MCF 10A (cell line): ENCODE measurements at regions of chr17 and their contacts with region 1.

Region 1: DNA sequence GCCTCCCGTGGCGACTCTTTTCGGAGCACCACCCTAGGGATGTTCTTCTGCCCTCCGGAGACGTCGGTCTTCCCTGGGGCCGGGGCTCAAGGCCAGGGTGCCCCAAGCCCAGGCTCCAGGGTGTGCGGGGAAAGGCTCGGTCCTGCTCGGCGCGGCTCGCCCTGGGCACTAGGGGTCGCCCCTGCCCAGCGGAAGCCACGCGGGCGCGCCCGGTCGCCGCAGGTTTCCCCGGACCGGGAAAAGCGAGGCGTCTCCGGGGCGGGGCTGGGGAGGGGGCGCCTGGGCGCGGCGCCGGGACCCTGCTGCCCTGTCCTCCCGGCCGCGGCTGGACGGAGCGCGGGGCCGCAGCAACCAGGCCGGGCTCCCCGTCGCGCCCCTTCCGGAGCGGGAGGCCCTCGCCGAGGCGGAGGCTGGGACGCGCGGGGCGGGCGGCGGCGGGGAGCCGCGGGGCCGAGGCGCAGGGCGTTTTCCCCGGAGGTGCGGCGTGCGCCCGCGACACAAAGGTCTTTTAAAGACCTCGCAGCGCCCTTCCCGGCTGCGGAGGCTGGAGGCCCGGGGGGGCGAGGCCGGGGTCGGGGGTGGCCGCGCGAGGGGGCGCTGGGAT is 76.4 kb downstream of the MRC2 start:
- DNase-seq: peak; percentile 75
- H3K4me3 Mint-ChIP-seq: peak overlapping the region; percentile 74
- H3K27ac Mint-ChIP-seq: peak overlapping the region; percentile 15
- H3K4me1 Mint-ChIP-seq: peaks cover 7% of the 10 kb centered on the region
- H3K27me3 Mint-ChIP-seq: no peaks in the 10 kb centered on the region
- CTCF ChIP-seq: peak; percentile 88

Region 2: GRCh38 chr17:62819475-62820212 is 115.8 kb after region 1 on chr17:
- CTCF ChIA-PET with region 1: interaction called, 4 read pairs
- POLR2A ChIA-PET with region 1: no interaction called
- intact Hi-C with region 1: loop called (anchors 2 kb)
- DNase-seq: peak; percentile 95
- H3K4me3 Mint-ChIP-seq: peak overlapping the region; percentile 50
- H3K27ac Mint-ChIP-seq: peak overlapping the region; percentile 91
- H3K4me1 Mint-ChIP-seq: peaks cover 34% of the 10 kb centered on the region
- H3K27me3 Mint-ChIP-seq: no peaks in the 10 kb centered on the region
- CTCF ChIP-seq: no peak

Region 3: DNA sequence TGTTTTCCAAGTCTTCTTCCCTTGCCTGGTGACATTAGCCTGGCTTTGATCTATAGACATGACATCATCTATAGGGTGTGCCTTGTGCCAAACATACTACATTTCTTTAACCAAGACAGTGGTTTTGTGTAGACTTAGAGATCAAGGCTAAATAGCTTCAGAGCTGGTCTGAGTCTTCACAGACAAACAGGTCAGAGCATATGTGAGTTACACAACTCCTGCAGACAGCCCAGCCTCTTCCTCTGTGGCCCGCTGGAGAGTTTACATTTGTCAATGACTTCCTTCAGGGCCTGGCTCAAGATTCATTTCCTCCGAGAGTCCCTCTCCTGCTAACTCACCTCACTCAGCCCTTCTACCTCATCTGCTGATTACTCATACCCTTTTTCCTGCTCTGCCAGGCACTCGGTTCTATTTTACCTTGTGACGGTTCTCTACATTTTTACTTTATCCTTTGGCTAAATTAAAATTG is 189.0 kb after region 1 on chr17:
- CTCF ChIA-PET with region 1: interaction called, 3 read pairs
- POLR2A ChIA-PET with region 1: no interaction called
- intact Hi-C with region 1: loop called (anchors 5 kb)
- DNase-seq: peak; percentile 96
- H3K4me3 Mint-ChIP-seq: peak overlapping the region; percentile 44
- H3K27ac Mint-ChIP-seq: peak overlapping the region; percentile 81
- H3K4me1 Mint-ChIP-seq: peaks cover 17% of the 10 kb centered on the region
- H3K27me3 Mint-ChIP-seq: no peaks in the 10 kb centered on the region
- CTCF ChIP-seq: no peak

Region 4: DNA sequence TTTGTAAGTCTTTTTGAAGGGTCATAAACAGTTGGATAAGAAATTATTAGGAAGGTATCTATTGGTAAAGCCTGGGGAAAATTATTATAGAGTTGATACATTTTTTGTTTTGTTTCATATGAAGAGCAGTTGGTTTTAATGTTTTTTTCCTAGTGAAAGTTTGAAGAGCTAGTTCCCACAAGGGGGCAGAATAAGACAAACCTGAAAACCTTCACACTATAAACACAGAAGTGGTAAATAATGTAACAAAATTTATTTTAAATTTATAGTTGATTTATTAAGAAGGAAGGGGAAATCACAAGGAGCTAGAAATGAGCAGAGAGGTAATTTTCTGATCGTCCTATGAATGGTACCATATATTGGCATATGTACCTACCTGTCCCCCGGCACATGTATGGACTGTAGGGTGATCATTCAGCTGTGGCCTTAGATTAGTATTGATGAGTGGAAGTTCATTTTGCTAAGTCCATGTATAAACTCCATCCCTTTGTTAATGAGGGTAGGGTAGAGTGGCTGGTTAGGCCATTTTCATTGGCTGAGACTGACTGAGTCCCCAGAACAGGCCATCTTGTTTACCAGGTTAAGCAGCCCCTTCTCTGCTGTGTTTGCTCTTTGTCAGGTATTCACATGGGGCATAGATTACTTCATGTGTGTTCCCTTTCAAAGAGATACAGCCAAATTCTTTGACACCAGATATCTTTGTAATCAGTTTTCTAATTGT is 378.6 kb after region 1 on chr17:
- CTCF ChIA-PET with region 1: no interaction called
- POLR2A ChIA-PET with region 1: no interaction called
- intact Hi-C with region 1: loop called (anchors 2 kb)
- DNase-seq: peak; percentile 21
- H3K4me3 Mint-ChIP-seq: no peak overlapping the region
- H3K27ac Mint-ChIP-seq: no peak overlapping the region
- H3K4me1 Mint-ChIP-seq: peaks cover 14% of the 10 kb centered on the region
- H3K27me3 Mint-ChIP-seq: no peaks in the 10 kb centered on the region
- CTCF ChIP-seq: peak; percentile 44